Activated T-helper 1 cell treated with anti-CD3 and anti-CD28 coated beads, Interleukin-12 subunit alpha, Interleukin-12 subunit beta, Interleukin-2, Interleukin-4 antibody, amounts not matched to agents 30 ng/mL and 10 ng/mL and 1 ng/mL, durations not matched to agents 14 hours and 24 hours and 36 hours (primary cell): ENCODE measurements at regions of chr4 and their contacts with region 1.

Region 1: DNA sequence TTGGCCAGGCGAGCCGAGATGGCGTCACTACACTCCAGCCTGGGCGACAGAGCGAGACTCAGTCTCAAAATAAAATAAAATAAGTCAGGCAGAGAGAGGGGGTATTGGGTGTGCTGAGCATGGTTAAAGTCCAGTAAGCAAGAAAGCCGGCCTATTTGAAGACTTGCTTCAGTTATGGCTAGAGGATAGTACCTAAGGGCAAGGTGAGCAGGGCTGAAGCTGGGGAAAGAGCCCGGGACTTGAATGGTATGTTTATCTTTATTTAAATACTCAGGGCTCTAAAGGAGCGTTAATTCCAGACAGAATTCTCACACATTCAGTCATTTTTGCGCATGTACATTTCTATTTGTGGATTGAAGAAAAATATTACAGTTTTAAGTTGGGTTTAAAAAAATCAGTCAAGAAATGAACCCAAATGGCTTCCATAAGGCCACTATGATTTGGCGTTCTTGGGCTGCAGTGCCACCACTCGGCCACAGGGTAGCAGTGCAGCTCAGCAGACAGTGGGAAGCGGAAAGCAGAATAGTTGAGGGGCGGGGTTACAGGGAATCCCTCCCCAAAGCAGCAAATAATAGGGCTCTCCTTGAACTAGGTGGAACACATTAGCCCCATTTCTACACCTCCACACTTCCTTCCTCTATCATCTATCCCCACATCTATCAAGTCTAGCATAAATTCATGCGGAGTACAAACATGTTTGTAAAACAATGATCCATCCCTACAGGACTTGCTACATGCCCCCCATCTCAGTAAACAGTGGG is 37.2 kb upstream of the SH3D19 start:
- DNase-seq: peak; percentile 63
- H3K4me3 Mint-ChIP-seq: no peak overlapping the region
- H3K27ac Mint-ChIP-seq: no peak overlapping the region
- H3K4me1 Mint-ChIP-seq: no peaks in the 10 kb centered on the region
- H3K27me3 Mint-ChIP-seq: peaks cover 12% of the 10 kb centered on the region

Region 2: DNA sequence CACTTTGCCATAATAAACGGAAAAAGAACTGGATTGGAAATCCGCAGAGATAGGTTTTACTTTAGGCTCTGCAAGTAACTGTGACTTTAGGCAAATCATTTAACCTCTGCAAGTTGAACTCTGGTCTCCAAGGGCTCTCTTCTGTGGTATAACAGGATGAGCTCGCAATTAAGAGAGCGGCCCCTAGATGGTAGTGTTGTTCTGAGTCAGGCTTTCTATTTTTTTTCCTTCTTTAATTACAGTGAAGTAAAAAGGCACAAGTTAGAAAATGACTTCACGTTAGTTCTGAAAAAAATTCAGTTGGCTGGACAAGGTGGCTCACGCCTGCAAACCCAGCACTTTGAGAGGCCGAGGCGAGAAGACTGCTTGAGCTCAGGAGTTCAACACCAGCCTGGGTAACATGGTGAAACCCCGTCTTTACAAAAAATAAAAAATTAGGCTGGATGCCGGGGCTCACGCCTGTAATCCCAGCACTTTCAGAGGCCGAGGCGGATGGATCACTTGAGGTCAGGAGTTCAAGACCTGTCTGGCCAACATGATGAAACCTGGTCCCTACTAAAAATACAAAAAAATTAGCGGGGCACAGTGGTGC is 245.1 kb before region 1 on chr4:
- intact Hi-C with region 1: loop called (anchors 1 kb)
- DNase-seq: peak; percentile 36
- H3K4me3 Mint-ChIP-seq: no peak overlapping the region
- H3K27ac Mint-ChIP-seq: peak overlapping the region; percentile 63
- H3K4me1 Mint-ChIP-seq: peaks cover 9% of the 10 kb centered on the region
- H3K27me3 Mint-ChIP-seq: no peaks in the 10 kb centered on the region

Region 3: DNA sequence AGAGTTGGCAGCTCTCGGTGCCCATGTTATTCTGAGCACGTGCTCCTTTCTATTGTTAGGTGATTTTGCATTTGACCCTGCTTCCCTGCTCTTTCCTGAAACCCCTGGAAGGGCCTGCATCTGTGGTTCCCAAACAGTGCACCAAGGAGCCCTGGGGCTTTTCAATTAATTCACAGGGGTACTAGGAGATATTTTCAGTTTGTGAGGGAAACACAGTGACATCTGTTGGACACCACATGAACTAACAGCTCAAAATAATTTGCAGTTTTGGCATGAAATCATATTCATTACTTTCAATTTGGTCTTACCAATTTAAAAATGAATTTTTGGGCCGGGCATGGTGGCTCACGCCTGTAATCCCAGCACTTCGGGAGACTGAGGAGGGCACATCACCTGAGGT is 241.7 kb after region 1 on chr4:
- intact Hi-C with region 1: loop called (anchors 1 kb)
- DNase-seq: no peak
- H3K4me3 Mint-ChIP-seq: no peak overlapping the region
- H3K27ac Mint-ChIP-seq: no peak overlapping the region
- H3K4me1 Mint-ChIP-seq: no peaks in the 10 kb centered on the region
- H3K27me3 Mint-ChIP-seq: peaks cover 4% of the 10 kb centered on the region

Region 4: GRCh38 chr4:151613290-151613689 is 250.7 kb after region 1 on chr4:
- intact Hi-C with region 1: loop called (anchors 2 kb)
- DNase-seq: no peak
- H3K4me3 Mint-ChIP-seq: no peak overlapping the region
- H3K27ac Mint-ChIP-seq: no peak overlapping the region
- H3K4me1 Mint-ChIP-seq: no peaks in the 10 kb centered on the region
- H3K27me3 Mint-ChIP-seq: peaks cover 12% of the 10 kb centered on the region

Region 5: DNA sequence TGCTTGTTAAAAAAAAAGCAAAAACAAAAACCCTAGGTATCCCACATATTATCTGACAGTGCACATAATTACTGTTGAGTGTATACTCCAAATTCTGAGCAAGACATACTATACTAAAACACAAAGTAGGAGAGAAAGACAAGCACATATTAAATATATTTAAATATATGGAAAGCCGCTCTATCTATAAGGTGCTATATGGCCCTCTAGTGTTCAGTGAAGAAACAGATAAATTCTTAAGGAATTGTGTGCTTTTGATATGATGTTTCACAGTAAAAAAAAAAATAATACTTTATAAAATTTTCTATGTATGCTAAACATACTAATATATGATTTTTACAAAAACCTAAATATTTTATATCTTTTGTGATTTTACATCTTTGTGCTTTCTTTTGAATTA is 1035.5 kb after region 1 on chr4:
- intact Hi-C with region 1: loop called (anchors 5 kb)
- DNase-seq: no peak
- H3K4me3 Mint-ChIP-seq: no peak overlapping the region
- H3K27ac Mint-ChIP-seq: no peak overlapping the region
- H3K4me1 Mint-ChIP-seq: peaks cover 37% of the 10 kb centered on the region
- H3K27me3 Mint-ChIP-seq: no peaks in the 10 kb centered on the region